PC-3 (cell line): ENCODE measurements at regions of chr7 and their contacts with region 1.

Region 1: DNA sequence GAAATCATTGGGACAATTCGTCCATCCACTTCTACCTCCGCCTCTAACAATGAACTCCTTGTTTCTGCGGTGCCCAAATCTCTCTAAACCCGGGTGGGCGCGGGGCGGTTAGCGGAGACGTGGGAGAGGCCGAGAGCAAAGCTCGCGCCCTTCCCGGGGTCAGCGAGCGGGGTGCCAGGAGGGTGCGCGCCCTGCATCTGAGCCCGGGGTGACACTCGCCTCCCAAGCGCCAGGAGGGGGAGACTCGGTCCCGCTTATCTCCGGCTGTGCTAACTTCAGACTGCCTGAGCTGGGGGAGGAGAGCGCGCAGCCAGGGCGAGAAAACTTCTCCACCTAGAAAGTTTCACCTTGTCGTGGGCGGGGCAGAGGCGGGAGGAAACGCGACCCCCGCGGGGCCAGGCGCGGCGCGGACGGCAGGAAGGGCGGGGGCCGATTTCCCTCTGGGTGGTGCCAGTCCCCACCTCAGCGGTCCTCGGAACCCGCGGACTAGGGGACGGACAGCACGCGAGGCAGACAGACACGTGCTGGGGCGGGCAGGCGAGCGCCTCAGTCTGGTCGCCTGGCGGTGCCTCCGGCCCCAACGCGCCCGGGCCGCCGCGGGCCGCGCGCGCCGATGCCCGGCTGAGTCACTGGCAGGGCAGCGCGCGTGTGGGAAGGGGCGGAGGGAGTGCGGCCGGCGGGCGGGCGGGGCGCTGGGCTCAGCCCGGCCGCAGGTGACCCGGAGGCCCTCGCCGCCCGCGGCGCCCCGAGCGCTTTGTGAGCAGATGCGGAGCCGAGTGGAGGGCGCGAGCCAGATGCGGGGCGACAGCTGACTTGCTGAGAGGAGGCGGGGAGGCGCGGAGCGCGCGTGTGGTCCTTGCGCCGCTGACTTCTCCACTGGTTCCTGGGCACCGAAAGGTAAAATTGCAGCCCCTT is at the start of gene MET:
- DNase-seq: peak; percentile 90
- ATAC-seq: peak; percentile 76
- H3K4me3 ChIP-seq: peak within 1 kb of the TSS; percentile 99
- H3K27ac ChIP-seq: peak within 1 kb of the TSS; percentile 93
- H3K4me1 ChIP-seq: peaks cover 28% of the 10 kb centered on the region
- H3K27me3 ChIP-seq: no peaks in the 10 kb centered on the region
- CTCF ChIP-seq: peak; percentile 71
- total RNA-seq, gene MET: 109 and 118 TPM in 2 replicates

Region 2: GRCh38 chr7:116395125-116395791 is 276.7 kb before region 1 on chr7:
- CTCF ChIA-PET with region 1: no interaction called
- POLR2A ChIA-PET with region 1: no interaction called
- intact Hi-C with region 1: no loop called
- DNase-seq: peak; percentile 92
- ATAC-seq: peak; percentile 100
- H3K4me3 ChIP-seq: peak overlapping the region; percentile 27
- H3K27ac ChIP-seq: peak overlapping the region; percentile 83
- H3K4me1 ChIP-seq: peaks cover 30% of the 10 kb centered on the region
- H3K27me3 ChIP-seq: no peaks in the 10 kb centered on the region
- CTCF ChIP-seq: no peak

Region 3: DNA sequence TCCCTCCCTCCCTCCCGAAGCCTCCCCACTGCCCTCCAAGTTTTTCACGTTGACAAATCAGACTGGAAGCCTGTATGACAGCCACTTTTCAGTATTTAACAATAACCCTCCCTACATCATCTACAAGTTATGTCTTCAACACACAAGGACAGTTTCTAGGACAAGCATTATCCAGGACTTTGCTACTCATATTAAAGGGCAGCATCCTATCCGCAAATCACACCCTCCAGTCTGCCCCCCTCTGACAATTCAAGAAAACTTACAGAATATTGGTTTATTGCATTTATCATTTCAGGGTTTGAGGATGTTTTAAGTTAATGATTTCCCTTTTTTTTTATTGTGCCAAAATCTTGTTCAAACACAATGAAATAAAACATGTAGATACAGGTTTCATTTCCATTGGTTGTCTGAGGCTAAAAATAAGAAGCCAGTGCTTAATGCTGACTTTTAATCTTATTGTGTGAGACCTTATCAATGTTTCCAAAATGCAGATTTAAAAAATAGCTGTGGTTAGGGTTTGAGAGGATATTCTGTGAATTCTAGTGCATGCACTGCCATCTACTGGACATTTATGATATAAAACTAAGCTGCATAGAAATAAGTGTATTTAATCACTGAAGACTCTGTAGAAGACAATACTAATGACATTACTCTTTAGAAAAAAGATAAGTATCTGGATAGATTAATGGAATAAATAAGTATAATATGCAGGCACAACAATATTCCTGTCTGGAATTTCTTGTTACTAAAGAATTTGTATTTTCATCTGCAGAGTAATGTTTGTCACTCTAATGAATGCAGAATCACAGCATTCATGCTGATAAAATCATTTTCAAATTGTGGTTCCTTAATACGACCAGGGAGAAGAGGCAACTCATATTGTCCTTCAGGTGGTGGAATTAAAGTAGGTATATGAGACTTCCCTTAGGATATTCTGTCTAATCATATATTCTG is 83.0 kb before region 1 on chr7:
- CTCF ChIA-PET with region 1: interaction called, 4 read pairs
- POLR2A ChIA-PET with region 1: no interaction called
- intact Hi-C with region 1: loop called (anchors 1 kb)
- DNase-seq: peak; percentile 88
- ATAC-seq: peak; percentile 49
- H3K4me3 ChIP-seq: no peak overlapping the region
- H3K27ac ChIP-seq: peak overlapping the region; percentile 3; the same call in 1 of the 2 replicates
- H3K4me1 ChIP-seq: peaks cover 26% of the 10 kb centered on the region
- H3K27me3 ChIP-seq: no peaks in the 10 kb centered on the region
- CTCF ChIP-seq: peak; percentile 87

Region 4: DNA sequence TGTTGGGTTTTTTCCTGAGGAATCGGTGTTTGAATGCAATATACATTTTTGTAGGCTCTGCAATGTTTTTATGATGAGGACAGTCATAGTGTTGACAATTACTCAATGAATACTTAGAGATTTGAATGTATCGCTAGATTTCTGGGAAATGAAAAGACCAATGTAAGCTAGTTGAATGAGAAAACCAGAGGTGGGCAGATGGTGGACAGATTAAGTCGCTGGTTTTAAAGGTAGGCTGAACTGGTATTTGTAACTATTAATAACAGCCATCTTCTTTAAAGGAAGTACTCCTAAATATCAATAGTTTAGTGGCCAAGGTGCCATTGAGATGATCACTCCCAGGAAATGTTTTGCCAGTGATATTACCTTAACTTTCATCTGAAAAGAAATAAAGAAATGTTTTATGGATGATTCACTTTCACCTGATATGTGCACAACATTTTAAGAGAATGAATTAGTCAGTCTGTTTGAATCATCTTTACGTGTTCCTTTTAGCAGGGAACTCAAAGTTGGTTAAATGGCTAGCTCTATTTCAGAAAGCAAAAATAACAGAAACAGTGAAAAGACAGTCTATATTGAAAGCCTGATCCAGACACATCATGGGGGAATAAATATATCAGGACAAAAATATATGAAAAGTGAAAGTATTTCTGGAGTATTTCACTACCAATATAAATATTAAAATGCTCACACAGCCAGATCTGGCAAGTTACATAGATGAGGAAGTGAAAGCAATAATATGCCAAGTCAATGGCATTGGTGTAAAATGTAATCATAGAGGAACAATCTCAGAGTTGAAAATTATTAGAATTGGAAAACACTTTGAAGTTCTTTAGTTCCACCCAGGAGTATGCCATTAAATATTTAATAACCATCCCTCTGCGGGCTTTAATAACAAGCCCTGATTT is 20.7 kb after region 1 on chr7:
- CTCF ChIA-PET with region 1: interaction called, 8 read pairs
- POLR2A ChIA-PET with region 1: no interaction called
- intact Hi-C with region 1: loop called (anchors 1 kb)
- DNase-seq: peak; percentile 85
- ATAC-seq: peak; percentile 52
- H3K4me3 ChIP-seq: peak overlapping the region; percentile 34
- H3K27ac ChIP-seq: peak overlapping the region; percentile 89
- H3K4me1 ChIP-seq: peaks cover 64% of the 10 kb centered on the region
- H3K27me3 ChIP-seq: no peaks in the 10 kb centered on the region
- CTCF ChIP-seq: no peak

Region 5: GRCh38 chr7:116726713-116727431 is 54.9 kb after region 1 on chr7:
- CTCF ChIA-PET with region 1: interaction called, 3 read pairs
- POLR2A ChIA-PET with region 1: no interaction called
- intact Hi-C with region 1: loop called (anchors 1 kb)
- DNase-seq: no peak
- ATAC-seq: no peak
- H3K4me3 ChIP-seq: no peak overlapping the region
- H3K27ac ChIP-seq: peak overlapping the region; percentile 28; the same call in 1 of the 2 replicates
- H3K4me1 ChIP-seq: peaks cover 47% of the 10 kb centered on the region
- H3K27me3 ChIP-seq: no peaks in the 10 kb centered on the region
- CTCF ChIP-seq: no peak

Region 6: DNA sequence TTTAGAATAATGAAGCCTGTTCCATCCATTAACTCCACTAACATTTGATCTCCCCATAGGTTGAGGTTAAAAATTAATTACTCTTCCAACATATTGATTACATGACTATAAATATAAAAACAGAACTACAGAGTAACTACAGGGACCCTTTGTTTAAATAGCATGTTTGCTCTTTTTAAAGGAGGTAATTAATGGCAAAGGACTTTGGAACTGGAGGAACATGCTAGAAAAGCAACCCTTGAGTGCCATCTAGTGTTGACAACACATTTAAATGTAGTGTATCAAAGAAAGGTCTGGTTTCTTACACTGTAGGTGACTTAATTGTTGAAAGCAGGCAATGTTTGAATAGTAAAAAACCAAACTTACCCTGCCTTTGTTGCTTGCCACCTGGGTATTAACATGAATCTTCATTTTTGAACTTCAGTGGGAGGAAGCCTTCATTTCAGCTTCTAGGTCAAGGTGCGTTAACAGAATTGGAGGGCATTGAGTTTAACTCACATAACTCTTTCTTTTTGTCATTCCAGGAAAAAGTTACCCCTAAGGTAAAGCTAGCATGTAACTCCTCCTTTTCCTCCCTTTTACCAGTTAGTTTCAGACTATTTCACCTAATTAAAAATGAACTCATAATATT is 137.8 kb after region 1 on chr7:
- CTCF ChIA-PET with region 1: interaction called, 9 read pairs
- POLR2A ChIA-PET with region 1: interaction called, 4 read pairs
- intact Hi-C with region 1: loop called (anchors 1 kb)
- DNase-seq: peak; percentile 87
- ATAC-seq: peak; percentile 82
- H3K4me3 ChIP-seq: peak overlapping the region; percentile 42
- H3K27ac ChIP-seq: peak overlapping the region; percentile 76
- H3K4me1 ChIP-seq: peaks cover 38% of the 10 kb centered on the region
- H3K27me3 ChIP-seq: no peaks in the 10 kb centered on the region
- CTCF ChIP-seq: peak; percentile 85

Region 7: DNA sequence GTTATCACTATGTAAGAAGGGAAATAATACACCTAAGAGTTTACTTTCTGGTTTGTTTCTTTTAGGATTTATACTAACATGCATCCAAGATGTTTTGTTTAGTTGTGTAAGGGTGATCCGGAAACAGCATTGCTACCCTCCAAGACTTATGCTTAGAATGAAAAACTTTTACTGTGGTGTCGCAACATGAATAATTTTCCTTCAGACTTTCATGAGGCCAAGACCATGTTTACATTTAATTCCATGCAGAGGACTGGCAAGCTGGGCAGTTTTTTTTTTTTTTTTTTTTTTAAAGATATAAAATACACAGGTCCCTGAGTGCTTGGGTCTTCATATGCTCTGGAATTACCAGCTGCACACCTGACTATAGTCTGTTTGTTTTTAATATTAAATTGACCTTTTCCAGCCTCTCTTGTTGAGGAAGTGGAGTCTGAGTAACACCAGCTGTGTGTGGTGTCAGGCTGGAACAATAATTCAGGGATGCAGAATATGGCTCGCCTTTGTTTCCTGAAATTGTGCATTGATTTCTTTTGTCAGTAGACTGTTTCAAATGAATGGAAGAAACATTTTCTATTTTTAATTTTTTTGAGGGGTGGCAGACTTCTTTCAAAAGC is 363.0 kb after region 1 on chr7:
- CTCF ChIA-PET with region 1: no interaction called
- POLR2A ChIA-PET with region 1: no interaction called
- intact Hi-C with region 1: no loop called
- DNase-seq: no peak
- ATAC-seq: no peak
- H3K4me3 ChIP-seq: no peak overlapping the region
- H3K27ac ChIP-seq: no peak overlapping the region
- H3K4me1 ChIP-seq: no peaks in the 10 kb centered on the region
- H3K27me3 ChIP-seq: no peaks in the 10 kb centered on the region
- CTCF ChIP-seq: no peak